Activated CD4-positive, alpha-beta T cell treated with anti-CD3 and anti-CD28 coated beads, Interleukin-2, amount 10 ng/mL, durations not matched to agents 24 days and 14 days (primary cell): ENCODE measurements at regions of chr2 and their contacts with region 1.

Region 1: DNA sequence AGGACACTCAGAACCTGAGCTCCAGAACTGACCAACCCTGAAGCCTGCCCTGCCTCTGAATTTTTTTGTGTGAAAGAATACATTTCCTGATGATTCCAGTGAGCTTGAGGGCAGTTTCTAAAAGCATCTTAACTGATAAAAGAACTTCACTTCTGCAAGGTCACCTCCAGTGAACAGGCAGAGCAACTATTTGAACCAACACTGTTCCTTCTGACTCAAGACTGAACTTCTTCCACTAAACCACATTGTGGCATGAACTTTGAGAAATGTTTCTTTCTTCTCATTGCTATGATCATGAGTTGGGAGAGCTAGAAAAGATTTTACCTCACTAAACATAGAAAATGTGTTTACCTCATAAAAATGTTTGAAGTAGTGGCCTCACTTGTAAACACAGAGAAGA is 83.8 kb upstream of the SERTAD2 start:
- DNase-seq: peak; percentile 73
- H3K4me3 Mint-ChIP-seq: peak overlapping the region; percentile 72
- H3K27ac Mint-ChIP-seq: peak overlapping the region; percentile 77
- H3K4me1 Mint-ChIP-seq: peaks cover 30% of the 10 kb centered on the region
- H3K27me3 Mint-ChIP-seq: no peaks in the 10 kb centered on the region

Region 2: GRCh38 chr2:64859312-64860212 is 122.0 kb after region 1 on chr2:
- intact Hi-C with region 1: loop called (anchors 5 kb)
- DNase-seq: peak; percentile 64
- H3K4me3 Mint-ChIP-seq: peak overlapping the region; percentile 1
- H3K27ac Mint-ChIP-seq: no peak overlapping the region
- H3K4me1 Mint-ChIP-seq: peaks cover 6% of the 10 kb centered on the region
- H3K27me3 Mint-ChIP-seq: peaks cover 4% of the 10 kb centered on the region